GM12878 (cell line): ENCODE measurements at regions of chr4 and their contacts with region 1.

Region 1: DNA sequence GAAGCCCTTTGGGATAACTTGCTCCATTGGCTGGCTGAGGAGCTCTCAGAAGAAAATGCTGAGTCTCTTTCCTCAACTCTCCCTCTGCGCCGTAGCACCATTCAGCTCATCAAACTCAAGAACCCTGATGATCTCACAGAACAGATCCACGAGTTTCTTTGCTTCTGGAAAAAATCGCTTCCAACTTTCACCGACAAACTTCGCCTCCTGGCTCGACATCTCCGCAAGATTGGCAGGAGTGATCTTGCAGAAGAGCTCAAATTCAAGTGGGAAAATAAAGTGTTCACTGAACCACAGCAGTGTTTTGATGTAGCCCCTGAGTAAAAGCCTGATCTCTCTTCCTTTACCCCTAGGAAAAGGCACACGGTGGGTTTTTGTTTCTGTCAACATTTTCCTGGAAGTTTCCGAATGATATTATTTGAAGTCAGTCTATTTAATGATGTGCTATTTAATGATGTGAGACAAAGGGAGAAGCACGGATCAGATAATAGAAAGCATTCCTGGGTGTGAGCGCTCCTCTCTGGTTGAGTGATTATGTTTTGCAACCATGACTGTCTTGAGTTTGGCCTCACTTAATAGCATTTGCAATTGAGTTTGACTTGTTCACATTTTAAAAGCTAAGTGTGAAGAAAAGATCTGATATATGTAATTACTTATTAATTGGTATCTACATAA is 62.2 kb downstream of the DTHD1 start:
- DNase-seq: no peak
- ATAC-seq: no peak
- H3K4me3 ChIP-seq: no peak overlapping the region
- H3K27ac ChIP-seq: no peak overlapping the region
- H3K4me1 ChIP-seq: peaks cover 4% of the 10 kb centered on the region; the same call in 1 of the 2 replicates
- H3K27me3 ChIP-seq: no peaks in the 10 kb centered on the region
- CTCF ChIP-seq: no peak
- EP300 ChIP-seq: no peak
- POLR2A ChIP-seq: no peak
- RAD21 ChIP-seq: no peak

Region 2: GRCh38 chr4:36332023-36332781 is 11.4 kb before region 1 on chr4:
- CTCF ChIA-PET with region 1: interaction called, 16 read pairs
- POLR2A ChIA-PET with region 1: interaction called, 4 read pairs
- RAD21 ChIA-PET with region 1: interaction called, 20 read pairs
- SMC1A ChIA-PET with region 1: interaction called, 67 read pairs
- in situ Hi-C with region 1: no loop called
- intact Hi-C with region 1: no loop called
- DNase-seq: peak; percentile 61
- ATAC-seq: peak; percentile 89
- H3K4me3 ChIP-seq: peak overlapping the region; percentile 41; the same call in 1 of the 2 replicates
- H3K27ac ChIP-seq: peak overlapping the region; percentile 91
- H3K4me1 ChIP-seq: peaks cover 22% of the 10 kb centered on the region
- H3K27me3 ChIP-seq: no peaks in the 10 kb centered on the region
- CTCF ChIP-seq: no peak
- EP300 ChIP-seq: no peak
- POLR2A ChIP-seq: peak; percentile 78
- RAD21 ChIP-seq: no peak